ENCODE measurements at regions of chr1 and their contacts with region 1.

Region 1: GRCh38 chr1:164786980-164787833 is 228.2 kb downstream of the PBX1 start:
- DNase-seq: peak; percentile 85
- ATAC-seq: peak; percentile 91
- H3K4me3 Mint-ChIP-seq: peak overlapping the region; percentile 44
- H3K27ac Mint-ChIP-seq: peak overlapping the region; percentile 95
- H3K4me1 Mint-ChIP-seq: peaks cover 51% of the 10 kb centered on the region
- H3K27me3 Mint-ChIP-seq: no peaks in the 10 kb centered on the region
- CTCF ChIP-seq: peak; percentile 85

Region 2: GRCh38 chr1:164558461-164559341 is 228.5 kb before region 1 on chr1 and contains the start of gene PBX1:
- CTCF ChIA-PET with region 1: interaction called, 14 read pairs
- POLR2A ChIA-PET with region 1: no interaction called
- DNase-seq: peak; percentile 97
- ATAC-seq: peak; percentile 99
- H3K4me3 Mint-ChIP-seq: peak within 1 kb of the TSS; percentile 100
- H3K27ac Mint-ChIP-seq: peak within 1 kb of the TSS; percentile 97
- H3K4me1 Mint-ChIP-seq: peaks cover 40% of the 10 kb centered on the region
- H3K27me3 Mint-ChIP-seq: no peaks in the 10 kb centered on the region
- CTCF ChIP-seq: no peak
- total RNA-seq, gene PBX1: 97.7 to 102 TPM (median 102 TPM) in 3 replicates

Region 3: DNA sequence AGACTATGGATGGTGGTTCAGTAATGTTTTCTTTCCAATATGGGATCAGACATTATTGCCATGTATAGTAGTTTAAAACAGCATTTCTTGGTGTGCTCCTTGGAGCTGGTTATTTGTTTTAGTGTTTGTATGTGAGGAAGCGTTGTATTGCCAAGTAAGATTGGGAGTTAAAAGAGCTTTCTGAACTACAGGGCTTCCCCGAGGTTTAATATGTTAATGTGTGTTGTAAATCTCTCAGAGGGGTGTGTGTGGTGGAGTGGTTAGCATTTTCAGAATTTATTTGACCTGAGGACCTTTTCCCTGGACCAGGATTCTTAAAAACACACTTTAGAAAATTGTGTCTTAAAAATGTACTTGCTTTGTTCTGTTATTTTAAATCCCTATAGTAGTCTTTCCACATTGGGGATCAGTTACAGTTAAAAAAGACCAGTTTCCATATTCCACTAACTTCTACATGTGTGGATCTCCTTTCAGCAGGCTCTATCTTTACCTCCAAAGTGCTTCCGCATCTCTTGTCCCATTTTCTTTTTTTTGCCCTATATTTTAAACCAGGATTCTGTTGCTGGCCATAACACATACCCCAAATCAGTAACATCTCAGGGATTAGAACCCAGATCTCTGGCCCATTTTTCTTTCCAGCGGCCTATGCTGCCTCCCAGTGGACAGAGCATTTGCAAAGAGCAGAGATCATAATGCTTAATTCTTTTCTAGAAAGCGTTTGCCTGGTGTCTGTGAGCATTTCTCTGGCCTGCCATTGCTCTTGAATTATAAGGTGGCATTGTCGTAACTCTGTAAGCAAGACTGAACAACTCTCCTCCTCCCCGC is 169.6 kb before region 1 on chr1:
- CTCF ChIA-PET with region 1: interaction called, 16 read pairs
- POLR2A ChIA-PET with region 1: interaction called, 3 read pairs
- DNase-seq: peak; percentile 71
- ATAC-seq: peak; percentile 55
- H3K4me3 Mint-ChIP-seq: no peak overlapping the region
- H3K27ac Mint-ChIP-seq: no peak overlapping the region
- H3K4me1 Mint-ChIP-seq: peaks cover 56% of the 10 kb centered on the region
- H3K27me3 Mint-ChIP-seq: no peaks in the 10 kb centered on the region
- CTCF ChIP-seq: 0 out of 2 replicates have a peak, but pooled peaks have one; percentile 42

Region 4: DNA sequence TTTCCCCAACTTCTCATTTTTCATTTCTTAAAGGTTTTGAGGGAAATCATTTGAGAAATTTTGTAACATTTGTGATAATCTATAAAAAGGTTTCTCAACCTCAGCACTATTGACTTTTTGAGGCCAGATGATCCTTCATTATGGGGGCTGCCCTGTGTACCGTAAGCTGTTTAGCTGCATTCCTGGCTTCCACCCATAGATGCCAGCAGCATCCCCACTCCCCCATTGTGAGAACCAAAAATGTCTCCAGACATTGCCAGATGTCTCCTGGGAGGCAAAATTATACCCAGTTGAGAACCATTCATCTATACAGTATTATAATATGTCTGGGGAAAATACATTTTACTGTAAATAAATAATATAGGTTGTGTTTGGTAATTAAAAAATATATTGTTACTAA is 82.3 kb before region 1 on chr1:
- CTCF ChIA-PET with region 1: interaction called, 16 read pairs
- POLR2A ChIA-PET with region 1: no interaction called
- DNase-seq: no peak
- ATAC-seq: peak; percentile 67
- H3K4me3 Mint-ChIP-seq: no peak overlapping the region
- H3K27ac Mint-ChIP-seq: no peak overlapping the region
- H3K4me1 Mint-ChIP-seq: peaks cover 74% of the 10 kb centered on the region
- H3K27me3 Mint-ChIP-seq: no peaks in the 10 kb centered on the region
- CTCF ChIP-seq: no peak

Region 5: DNA sequence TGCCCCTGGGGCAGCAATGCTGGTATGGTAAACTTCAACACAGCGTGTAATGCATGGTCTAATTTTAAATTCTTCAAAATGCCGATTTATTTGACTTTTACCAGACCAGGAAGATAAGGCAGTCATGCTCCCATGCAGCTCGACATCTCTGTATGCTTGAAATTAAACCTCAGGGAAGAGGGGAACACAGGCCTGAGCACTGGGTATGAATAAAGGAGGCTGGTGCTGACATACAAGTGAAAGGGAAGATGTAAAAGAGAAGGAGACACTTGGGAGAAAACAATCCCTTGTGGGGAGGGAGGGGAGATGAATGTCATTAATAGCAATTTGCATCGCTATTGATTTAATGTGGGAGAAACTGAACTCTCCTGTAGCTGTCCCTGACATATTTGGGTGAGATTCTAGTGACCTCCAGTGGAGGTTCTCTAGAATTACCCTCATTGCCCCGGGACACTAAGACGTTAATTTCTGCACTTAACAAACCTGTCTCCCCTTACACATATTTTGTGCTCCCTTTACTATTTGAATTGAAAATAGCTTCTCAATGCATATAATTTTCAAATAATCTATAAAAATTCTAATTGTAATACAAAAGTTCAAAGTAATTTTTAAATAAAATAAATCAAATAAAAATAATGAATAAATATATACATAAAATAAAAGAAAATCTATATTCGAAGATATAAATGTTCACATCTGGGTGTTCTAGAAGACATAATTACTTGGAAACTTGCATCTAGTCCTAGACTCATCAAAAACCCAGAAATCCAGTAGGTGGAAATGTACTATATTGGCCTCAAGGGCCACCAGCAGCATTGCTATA is 286.2 kb after region 1 on chr1:
- CTCF ChIA-PET with region 1: interaction called, 11 read pairs
- POLR2A ChIA-PET with region 1: no interaction called
- DNase-seq: no peak
- ATAC-seq: peak; percentile 81
- H3K4me3 Mint-ChIP-seq: no peak overlapping the region
- H3K27ac Mint-ChIP-seq: no peak overlapping the region
- H3K4me1 Mint-ChIP-seq: peaks cover 29% of the 10 kb centered on the region
- H3K27me3 Mint-ChIP-seq: no peaks in the 10 kb centered on the region
- CTCF ChIP-seq: peak; percentile 55